Activated B cell treated with CpG ODN at 0.5 μM for 24 hours (primary cell): ENCODE measurements at regions of chr17 and their contacts with region 1.

Region 1: DNA sequence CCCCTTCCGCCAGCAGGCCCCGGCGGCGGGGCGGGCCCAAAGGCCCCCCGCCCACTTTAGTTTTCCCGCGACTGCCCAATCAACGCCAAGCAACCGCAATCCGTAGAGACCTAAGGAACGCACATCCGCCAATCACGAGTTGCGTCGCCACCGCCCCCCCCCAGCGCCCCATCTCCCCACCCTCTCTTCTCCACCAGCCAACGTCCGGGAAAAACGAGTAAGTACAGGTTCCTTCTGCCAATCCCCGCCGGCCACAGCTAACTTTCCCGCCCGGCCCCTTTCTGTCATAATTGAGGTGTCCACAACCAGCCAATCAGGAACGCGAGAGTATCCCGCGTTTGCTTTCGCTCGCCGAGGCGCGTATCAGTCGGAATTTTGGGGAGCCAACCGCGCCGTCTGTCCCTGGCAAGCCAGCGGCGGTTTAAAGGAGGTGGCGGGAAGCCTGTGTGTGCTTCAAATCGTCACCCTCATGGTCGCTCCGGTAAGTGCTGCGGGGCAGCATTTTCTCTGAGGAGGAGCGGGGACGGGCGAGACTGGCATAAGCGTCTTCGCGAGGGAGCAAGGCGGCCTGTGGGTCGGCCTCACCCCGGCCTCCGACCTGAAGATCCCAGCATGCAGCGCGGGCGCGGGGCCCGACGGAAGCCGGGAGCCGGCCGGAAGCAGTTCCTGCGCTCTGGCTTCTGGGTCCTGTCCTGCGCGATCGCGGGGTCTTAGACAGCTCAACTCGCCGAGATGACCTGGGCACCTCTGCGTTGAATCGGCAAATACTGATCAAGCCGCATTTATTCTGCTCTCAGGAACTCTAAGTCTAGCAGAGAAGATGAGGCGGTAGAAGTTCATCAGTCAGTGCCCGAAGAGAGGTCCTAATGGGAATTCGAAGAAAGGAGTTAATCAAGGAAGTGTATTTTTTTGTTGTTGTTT is at the start of gene MIS12:
- DNase-seq: peak; percentile 84
- ATAC-seq: peak; percentile 87
- H3K4me3 Mint-ChIP-seq: peak within 1 kb of the TSS; percentile 94
- H3K27ac Mint-ChIP-seq: peak within 1 kb of the TSS; percentile 98
- H3K4me1 Mint-ChIP-seq: peaks cover 43% of the 10 kb centered on the region
- H3K27me3 Mint-ChIP-seq: no peaks in the 10 kb centered on the region
- CTCF ChIP-seq: no peak
- total RNA-seq, gene MIS12: 29.7 and 31.2 TPM in 2 replicates

Region 2: GRCh38 chr17:4366327-4367063 is 1120.0 kb before region 1 on chr17 and contains the start of gene UBE2G1:
- CTCF ChIA-PET with region 1: no interaction called
- POLR2A ChIA-PET with region 1: no interaction called
- intact Hi-C with region 1: no loop called
- DNase-seq: peak; percentile 99
- ATAC-seq: peak; percentile 81
- H3K4me3 Mint-ChIP-seq: peak within 1 kb of the TSS; percentile 86
- H3K27ac Mint-ChIP-seq: peak within 1 kb of the TSS; percentile 93
- H3K4me1 Mint-ChIP-seq: peaks cover 47% of the 10 kb centered on the region
- H3K27me3 Mint-ChIP-seq: no peaks in the 10 kb centered on the region
- CTCF ChIP-seq: no peak
- total RNA-seq, gene UBE2G1: 66.5 and 66.6 TPM in 2 replicates

Region 3: DNA sequence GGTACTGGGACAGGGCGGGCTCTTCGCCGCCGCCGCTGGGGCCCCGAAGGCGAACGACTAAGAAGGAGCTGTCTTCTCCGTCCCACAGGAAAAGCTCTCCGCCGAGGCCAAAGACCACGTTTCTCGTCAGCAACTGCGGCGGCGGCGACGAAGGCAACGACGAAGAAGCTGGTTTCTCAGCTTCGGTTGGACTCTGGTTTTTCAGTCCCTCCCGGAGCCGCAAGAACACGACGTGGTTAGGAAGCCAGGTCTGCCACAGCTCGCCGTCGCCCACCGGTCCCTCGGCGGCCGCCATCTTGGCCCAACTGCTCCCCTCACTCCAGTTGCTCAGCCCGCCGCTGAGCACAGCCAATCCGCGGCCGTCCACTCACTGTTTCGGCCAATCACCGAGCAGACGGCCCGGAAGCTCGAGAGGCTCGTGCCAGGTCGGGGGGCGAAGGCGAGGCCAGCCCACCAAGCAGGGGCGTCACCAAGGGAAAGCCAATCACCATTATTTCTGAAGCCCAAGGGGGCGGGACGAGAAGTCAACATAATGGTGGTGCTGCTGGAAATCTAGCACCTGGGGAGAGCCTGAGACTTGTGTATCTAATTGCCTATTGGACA is 67.0 kb before region 1 on chr17 and contains the start of gene NUP88:
- CTCF ChIA-PET with region 1: no interaction called
- POLR2A ChIA-PET with region 1: interaction called, 13 read pairs
- intact Hi-C with region 1: loop called (anchors 1 kb)
- DNase-seq: peak; percentile 87
- ATAC-seq: peak; percentile 86
- H3K4me3 Mint-ChIP-seq: peak within 1 kb of the TSS; percentile 100
- H3K27ac Mint-ChIP-seq: peak within 1 kb of the TSS; percentile 100
- H3K4me1 Mint-ChIP-seq: peaks cover 49% of the 10 kb centered on the region
- H3K27me3 Mint-ChIP-seq: no peaks in the 10 kb centered on the region
- CTCF ChIP-seq: no peak
- total RNA-seq, gene NUP88: 158 and 187 TPM in 2 replicates

Region 4: DNA sequence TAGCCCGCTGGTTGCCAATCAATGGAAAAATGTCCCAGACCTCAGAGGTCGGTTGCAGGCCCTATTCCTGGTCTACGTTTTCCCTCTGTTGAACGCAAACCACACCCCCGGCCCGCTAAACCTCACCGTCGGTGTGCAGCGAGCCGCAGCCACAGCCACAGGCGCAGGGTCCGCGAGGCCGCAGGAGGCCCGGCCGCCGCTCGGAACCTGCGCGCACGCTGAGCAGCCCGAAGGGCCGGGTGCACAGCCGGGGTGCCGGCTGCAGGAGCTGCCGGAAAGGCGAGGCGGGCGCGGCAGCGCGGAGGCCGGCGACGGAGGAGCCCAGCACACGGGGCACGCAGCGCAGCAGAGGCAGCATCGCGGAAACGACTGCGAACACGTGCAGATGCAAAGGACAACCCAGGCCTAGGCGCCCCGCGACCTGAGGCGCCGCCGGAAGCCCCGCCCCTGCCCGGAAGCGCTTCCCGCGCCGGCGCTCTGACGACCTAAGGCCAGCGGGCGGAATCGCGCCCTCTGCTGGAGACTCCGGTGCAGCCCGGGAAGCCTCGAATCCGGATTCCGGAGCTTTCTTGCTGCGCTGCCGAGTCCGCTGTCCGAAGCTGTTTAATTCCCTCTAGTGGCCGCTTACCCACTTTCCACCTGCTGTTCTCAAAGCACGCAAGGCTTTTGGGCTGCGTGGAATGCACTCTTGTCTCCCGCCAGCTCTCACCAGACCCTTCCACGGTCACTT is 47.6 kb before region 1 on chr17 and contains the start of gene C1QBP:
- CTCF ChIA-PET with region 1: interaction called, 4 read pairs
- POLR2A ChIA-PET with region 1: interaction called, 7 read pairs
- intact Hi-C with region 1: loop called (anchors 1 kb)
- DNase-seq: peak; percentile 95
- ATAC-seq: peak; percentile 91
- H3K4me3 Mint-ChIP-seq: peak within 1 kb of the TSS; percentile 83
- H3K27ac Mint-ChIP-seq: peak within 1 kb of the TSS; percentile 91
- H3K4me1 Mint-ChIP-seq: peaks cover 32% of the 10 kb centered on the region
- H3K27me3 Mint-ChIP-seq: no peaks in the 10 kb centered on the region
- CTCF ChIP-seq: peak; percentile 96
- total RNA-seq, gene C1QBP: 160 and 177 TPM in 2 replicates

Region 5: GRCh38 chr17:5468075-5468473 is 18.4 kb before region 1 on chr17:
- CTCF ChIA-PET with region 1: interaction called, 7 read pairs
- POLR2A ChIA-PET with region 1: interaction called, 78 read pairs
- intact Hi-C with region 1: loop called (anchors 1 kb)
- DNase-seq: no peak
- ATAC-seq: no peak
- H3K4me3 Mint-ChIP-seq: peak overlapping the region; percentile 85
- H3K27ac Mint-ChIP-seq: peak overlapping the region; percentile 47
- H3K4me1 Mint-ChIP-seq: peaks cover 37% of the 10 kb centered on the region
- H3K27me3 Mint-ChIP-seq: no peaks in the 10 kb centered on the region
- CTCF ChIP-seq: no peak

Region 6: GRCh38 chr17:5500589-5501391 is 14.3 kb after region 1 on chr17:
- CTCF ChIA-PET with region 1: no interaction called
- POLR2A ChIA-PET with region 1: interaction called, 15 read pairs
- intact Hi-C with region 1: loop called (anchors 1 kb)
- DNase-seq: peak; percentile 63
- ATAC-seq: peak; percentile 90
- H3K4me3 Mint-ChIP-seq: peak overlapping the region; percentile 90
- H3K27ac Mint-ChIP-seq: peak overlapping the region; percentile 27
- H3K4me1 Mint-ChIP-seq: peaks cover 20% of the 10 kb centered on the region
- H3K27me3 Mint-ChIP-seq: peaks cover 2% of the 10 kb centered on the region
- CTCF ChIP-seq: no peak

Region 7: DNA sequence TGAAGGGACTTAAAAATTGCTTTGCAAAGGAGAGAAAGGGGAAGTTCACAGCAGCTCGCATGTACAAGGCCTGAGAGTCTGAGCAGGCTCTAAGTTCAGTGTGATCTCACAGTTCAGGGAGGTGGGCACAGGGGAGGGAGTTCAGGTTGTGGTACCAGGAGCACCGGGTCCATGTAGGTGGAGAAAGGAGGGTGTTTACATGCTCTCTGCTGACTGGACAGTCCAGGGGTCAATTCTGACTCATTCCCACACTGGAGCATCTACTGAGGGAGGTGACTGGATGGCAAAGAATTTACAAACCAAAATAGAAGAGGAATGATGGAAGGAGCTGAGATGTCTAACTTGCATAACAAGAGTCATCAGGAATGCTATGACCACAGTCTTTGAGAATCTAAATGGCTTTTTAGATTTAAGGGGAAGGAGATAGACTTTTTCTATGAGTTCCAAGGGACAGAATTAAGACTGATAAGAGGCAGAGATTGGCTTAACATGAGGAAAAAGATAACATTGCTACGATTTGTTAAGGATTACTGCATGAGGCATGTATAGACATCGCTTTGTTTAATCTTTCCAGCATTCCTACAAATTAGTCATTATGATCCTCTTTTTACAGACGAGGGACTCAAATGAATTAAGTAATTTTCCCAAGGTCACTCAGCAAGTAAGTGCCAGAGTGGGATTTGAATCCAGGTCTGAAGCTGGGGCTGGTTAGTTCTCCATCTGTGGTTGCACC is 29.8 kb after region 1 on chr17:
- CTCF ChIA-PET with region 1: no interaction called
- POLR2A ChIA-PET with region 1: no interaction called
- intact Hi-C with region 1: no loop called
- DNase-seq: no peak
- ATAC-seq: no peak
- H3K4me3 Mint-ChIP-seq: no peak overlapping the region
- H3K27ac Mint-ChIP-seq: peak overlapping the region; percentile 14
- H3K4me1 Mint-ChIP-seq: peaks cover 15% of the 10 kb centered on the region
- H3K27me3 Mint-ChIP-seq: no peaks in the 10 kb centered on the region
- CTCF ChIP-seq: no peak

Region 8: GRCh38 chr17:6640536-6641373 is 1154.3 kb after region 1 on chr17 and contains the starts of genes KIAA0753 and TXNDC17:
- CTCF ChIA-PET with region 1: no interaction called
- POLR2A ChIA-PET with region 1: no interaction called
- intact Hi-C with region 1: loop called (anchors 1 kb)
- DNase-seq: peak; percentile 91
- ATAC-seq: peak; percentile 94
- H3K4me3 Mint-ChIP-seq: peak within 1 kb of the TSS; percentile 96
- H3K27ac Mint-ChIP-seq: peak within 1 kb of the TSS; percentile 99
- H3K4me1 Mint-ChIP-seq: peaks cover 46% of the 10 kb centered on the region
- H3K27me3 Mint-ChIP-seq: no peaks in the 10 kb centered on the region
- CTCF ChIP-seq: no peak
- total RNA-seq, gene KIAA0753: 21.0 and 24.7 TPM in 2 replicates
- total RNA-seq, gene TXNDC17: 42.7 and 54.5 TPM in 2 replicates

Region 9: DNA sequence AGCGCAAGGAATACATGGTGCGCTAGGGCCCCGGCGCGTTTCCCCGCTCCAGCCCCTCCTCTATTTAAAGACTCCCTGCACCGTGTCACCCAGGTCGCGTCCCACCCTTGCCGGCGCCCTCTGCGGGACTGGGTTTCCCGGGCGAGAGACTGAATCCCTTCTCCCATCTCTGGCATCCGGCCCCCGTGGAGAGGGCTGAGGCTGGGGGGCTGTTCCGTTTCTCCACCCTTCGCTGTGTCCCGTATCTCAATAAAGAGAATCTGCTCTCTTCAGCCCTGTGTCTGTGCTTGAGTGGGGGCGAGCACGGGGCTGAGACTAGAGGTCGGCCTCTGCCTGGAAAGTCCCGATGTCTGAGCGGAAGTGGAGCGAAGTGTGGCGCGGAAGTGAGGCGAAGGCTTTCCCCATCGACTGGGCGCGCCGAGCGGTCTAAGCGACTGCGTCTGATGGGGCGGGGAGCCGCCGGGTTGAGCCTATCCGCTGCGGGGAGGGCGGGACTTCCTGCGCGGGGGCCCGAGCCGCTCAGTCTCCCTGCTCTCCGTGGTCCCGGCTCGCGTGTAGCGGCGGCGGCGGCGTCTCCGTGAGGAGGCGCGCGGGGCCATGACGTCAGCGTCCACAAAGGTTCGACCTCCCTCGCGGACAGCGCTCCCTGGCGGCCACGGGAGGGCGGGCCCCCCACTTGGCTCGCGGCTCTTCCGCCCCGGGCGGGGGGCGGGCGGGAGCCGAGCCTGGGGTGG is 1528.0 kb after region 1 on chr17:
- CTCF ChIA-PET with region 1: no interaction called
- POLR2A ChIA-PET with region 1: no interaction called
- intact Hi-C with region 1: loop called (anchors 5 kb)
- DNase-seq: peak; percentile 96
- ATAC-seq: peak; percentile 84
- H3K4me3 Mint-ChIP-seq: peak overlapping the region; percentile 95
- H3K27ac Mint-ChIP-seq: peak overlapping the region; percentile 100
- H3K4me1 Mint-ChIP-seq: peaks cover 61% of the 10 kb centered on the region
- H3K27me3 Mint-ChIP-seq: no peaks in the 10 kb centered on the region
- CTCF ChIP-seq: no peak